G401 (cell line): ENCODE measurements at regions of chr11 and their contacts with region 1.

Region 1: GRCh38 chr11:62217191-62217748 is 8.8 kb downstream of the SCGB2A1 start:
- DNase-seq: peak; percentile 34

Region 2: GRCh38 chr11:62508268-62509058 is 291.2 kb after region 1 on chr11:
- in situ Hi-C with region 1: loop called (anchors 25 kb)
- DNase-seq: peak; percentile 71

Region 3: GRCh38 chr11:62856333-62856895 is 639.1 kb after region 1 on chr11:
- in situ Hi-C with region 1: no loop called
- DNase-seq: no peak